HepG2 (cell line): ENCODE measurements at regions of chr11 and their contacts with region 1.

Region 1: DNA sequence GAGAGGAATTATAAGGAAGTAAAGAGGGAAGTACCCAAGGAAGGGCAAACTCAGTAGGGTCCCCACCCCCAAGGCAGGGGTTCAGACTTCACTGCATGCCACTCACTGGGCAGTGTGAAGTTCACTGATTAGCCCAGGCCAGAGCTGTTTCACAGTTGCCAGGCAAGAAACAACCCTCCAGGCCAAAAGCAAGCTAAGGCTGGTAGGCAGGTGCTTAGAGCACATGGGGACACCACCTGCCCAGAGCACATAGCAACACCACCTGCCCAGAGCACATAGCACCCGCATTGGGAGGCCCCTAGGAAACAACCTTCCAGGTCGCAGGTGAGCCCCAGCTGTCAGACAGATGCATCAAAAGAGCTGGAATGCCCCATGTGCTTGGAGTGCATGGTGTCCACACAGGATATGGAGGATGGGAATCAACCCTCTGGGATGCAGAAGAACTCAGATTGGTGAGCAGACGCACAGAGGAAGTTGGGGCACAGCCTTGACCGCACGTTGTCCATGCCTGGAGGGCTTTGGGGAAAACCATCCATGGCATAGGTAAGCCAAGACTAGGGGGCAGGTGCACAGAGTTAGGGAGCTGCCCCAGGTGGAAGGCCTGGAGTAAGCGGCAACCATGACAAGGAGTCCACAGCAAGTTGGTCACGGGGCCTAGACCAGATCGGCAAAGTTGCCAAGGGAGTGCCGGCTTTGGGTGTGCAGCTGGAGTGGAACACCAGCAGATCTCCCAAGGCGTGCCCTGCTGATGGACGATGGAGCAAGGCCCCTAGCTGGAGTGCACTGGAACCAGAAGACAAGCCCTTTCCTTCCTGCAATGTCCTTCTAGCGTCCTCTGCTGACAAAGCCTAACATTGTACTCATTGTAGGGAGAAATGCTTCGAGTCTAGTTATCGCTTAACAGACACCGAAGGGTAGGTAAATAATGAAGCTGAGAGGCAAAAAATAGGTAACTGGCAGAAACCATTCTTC is 7.8 kb upstream of the TMEM216 start:
- DNase-seq: peak; percentile 39
- ATAC-seq: peak; percentile 82
- H3K4me3 ChIP-seq: no peak overlapping the region
- H3K27ac ChIP-seq: no peak overlapping the region
- H3K4me1 ChIP-seq: peaks cover 9% of the 10 kb centered on the region
- H3K27me3 ChIP-seq: no peaks in the 10 kb centered on the region
- CTCF ChIP-seq: peak; percentile 83
- EP300 ChIP-seq: no peak
- POLR2A ChIP-seq: no peak
- RAD21 ChIP-seq: 0 out of 2 replicates have a peak, but pooled peaks have one; percentile 18

Region 2: GRCh38 chr11:61254403-61255025 is 130.0 kb before region 1 on chr11:
- CTCF ChIA-PET with region 1: interaction called, 6 read pairs
- POLR2A ChIA-PET with region 1: no interaction called
- in situ Hi-C with region 1: no loop called
- intact Hi-C with region 1: loop called (anchors 10 kb)
- DNase-seq: peak; percentile 57
- ATAC-seq: peak; percentile 86
- H3K4me3 ChIP-seq: no peak overlapping the region
- H3K27ac ChIP-seq: no peak overlapping the region
- H3K4me1 ChIP-seq: no peaks in the 10 kb centered on the region
- H3K27me3 ChIP-seq: no peaks in the 10 kb centered on the region
- CTCF ChIP-seq: peak; percentile 96
- EP300 ChIP-seq: no peak
- POLR2A ChIP-seq: peak; percentile 12 to 52; a peak in 1 of 4 replicates
- RAD21 ChIP-seq: peak; percentile 74

Region 3: DNA sequence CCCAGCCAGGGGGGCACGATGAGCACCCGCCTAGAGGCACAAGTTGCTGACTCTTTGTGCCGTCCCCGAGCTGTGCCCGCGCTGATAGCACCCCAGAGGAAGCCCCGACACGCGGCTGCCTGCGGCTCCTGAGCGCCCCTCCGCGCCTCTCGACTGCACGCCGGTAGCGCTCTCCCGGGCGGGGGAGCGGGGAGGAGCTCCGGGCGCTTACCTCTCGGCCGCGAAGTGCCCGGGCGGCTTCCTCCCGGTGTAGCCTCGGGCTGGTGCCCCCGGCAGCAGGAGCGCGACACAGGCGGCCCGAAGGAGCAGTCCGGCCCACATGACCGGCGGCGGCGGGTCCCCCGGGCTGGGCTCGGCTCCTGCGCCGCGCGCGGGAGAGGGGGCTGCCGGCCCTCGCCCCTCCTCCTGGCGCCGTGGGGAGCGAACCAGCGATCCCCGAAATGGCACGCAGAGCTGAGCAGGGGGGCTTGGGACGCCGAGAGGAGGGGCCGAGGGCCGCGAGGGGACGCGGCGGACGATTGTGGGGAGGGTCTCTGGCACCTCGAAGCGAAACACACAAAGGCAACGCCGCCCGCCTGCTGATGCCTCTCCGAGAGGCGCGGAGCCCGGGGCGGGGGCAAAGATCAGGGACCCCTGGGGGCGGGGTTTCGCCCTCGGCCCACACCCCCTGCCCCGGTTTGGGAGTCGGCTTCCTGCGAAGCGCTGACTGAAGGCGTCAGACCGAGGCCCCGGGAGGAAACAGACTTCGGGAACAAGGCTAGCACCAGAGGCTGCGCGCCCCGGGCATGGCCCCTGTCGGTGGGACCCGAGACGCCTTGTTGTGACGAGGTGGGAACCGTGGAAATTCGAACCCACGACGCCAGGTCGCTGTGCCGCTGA is 89.6 kb before region 1 on chr11 and contains the start of gene VWCE:
- CTCF ChIA-PET with region 1: no interaction called
- POLR2A ChIA-PET with region 1: interaction called, 5 read pairs
- in situ Hi-C with region 1: no loop called
- intact Hi-C with region 1: loop called (anchors 5 kb)
- DNase-seq: peak; percentile 76
- ATAC-seq: peak; percentile 73
- H3K4me3 ChIP-seq: peak within 1 kb of the TSS; percentile 67 to 88 (median 83)
- H3K27ac ChIP-seq: peak within 1 kb of the TSS; percentile 94
- H3K4me1 ChIP-seq: peaks cover 74% of the 10 kb centered on the region
- H3K27me3 ChIP-seq: no peaks in the 10 kb centered on the region; a peak in 1 of 5 replicates
- CTCF ChIP-seq: peak; percentile 65
- EP300 ChIP-seq: no peak
- POLR2A ChIP-seq: peak; percentile 77 to 98
- RAD21 ChIP-seq: no peak; the same call in 1 of the 2 replicates
- total RNA-seq, gene VWCE: 10.4 and 27.6 TPM in 2 replicates